H1 (cell line): ENCODE measurements at regions of chr19 and their contacts with region 1.

Region 1: GRCh38 chr19:37987356-37988332 is 80.6 kb downstream of the SIPA1L3 start:
- DNase-seq: peak in 1 of 2 experiments; percentile 86
- H3K4me3 ChIP-seq: no peak overlapping the region
- H3K27ac ChIP-seq: no peak overlapping the region
- H3K4me1 ChIP-seq: peaks cover 15 to 41% (median 31%) of the 10 kb centered on the region in 4 experiments
- H3K27me3 ChIP-seq: no peaks in the 10 kb centered on the region
- CTCF ChIP-seq: peak; percentile 62 to 73 (median 72)
- EP300 ChIP-seq: no peak
- POLR2A ChIP-seq: no peak
- RAD21 ChIP-seq: peak; percentile 54 to 65

Region 2: DNA sequence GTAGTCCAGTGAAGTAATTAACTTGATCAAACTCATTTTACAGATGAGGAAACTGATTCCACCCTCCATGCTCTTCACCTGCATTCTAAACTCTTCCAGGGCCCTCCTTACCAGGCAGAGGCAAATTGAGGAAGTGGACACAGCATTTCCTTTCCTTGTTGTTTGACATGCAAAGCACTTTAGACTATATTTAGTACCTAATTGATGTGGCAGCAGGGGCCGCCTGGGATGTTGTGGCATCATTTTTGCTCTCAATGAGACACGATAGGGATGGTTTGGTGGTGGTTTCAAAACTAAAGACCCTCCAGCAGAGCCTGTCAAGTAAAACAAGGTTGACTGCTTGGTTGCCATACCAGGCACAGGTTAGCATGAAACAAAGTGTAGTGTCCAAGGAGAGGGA is 72.7 kb before region 1 on chr19:
- CTCF ChIA-PET with region 1: interaction called, 11 read pairs
- POLR2A ChIA-PET with region 1: interaction called, 4 read pairs
- DNase-seq: no peak
- H3K4me3 ChIP-seq: no peak overlapping the region
- H3K27ac ChIP-seq: no peak overlapping the region
- H3K4me1 ChIP-seq: peaks cover 0 to 15% (median 2%) of the 10 kb centered on the region in 4 experiments; a peak in 2 of 7 replicates
- H3K27me3 ChIP-seq: no peaks in the 10 kb centered on the region
- CTCF ChIP-seq: no peak
- EP300 ChIP-seq: no peak
- POLR2A ChIP-seq: no peak
- RAD21 ChIP-seq: no peak

Region 3: DNA sequence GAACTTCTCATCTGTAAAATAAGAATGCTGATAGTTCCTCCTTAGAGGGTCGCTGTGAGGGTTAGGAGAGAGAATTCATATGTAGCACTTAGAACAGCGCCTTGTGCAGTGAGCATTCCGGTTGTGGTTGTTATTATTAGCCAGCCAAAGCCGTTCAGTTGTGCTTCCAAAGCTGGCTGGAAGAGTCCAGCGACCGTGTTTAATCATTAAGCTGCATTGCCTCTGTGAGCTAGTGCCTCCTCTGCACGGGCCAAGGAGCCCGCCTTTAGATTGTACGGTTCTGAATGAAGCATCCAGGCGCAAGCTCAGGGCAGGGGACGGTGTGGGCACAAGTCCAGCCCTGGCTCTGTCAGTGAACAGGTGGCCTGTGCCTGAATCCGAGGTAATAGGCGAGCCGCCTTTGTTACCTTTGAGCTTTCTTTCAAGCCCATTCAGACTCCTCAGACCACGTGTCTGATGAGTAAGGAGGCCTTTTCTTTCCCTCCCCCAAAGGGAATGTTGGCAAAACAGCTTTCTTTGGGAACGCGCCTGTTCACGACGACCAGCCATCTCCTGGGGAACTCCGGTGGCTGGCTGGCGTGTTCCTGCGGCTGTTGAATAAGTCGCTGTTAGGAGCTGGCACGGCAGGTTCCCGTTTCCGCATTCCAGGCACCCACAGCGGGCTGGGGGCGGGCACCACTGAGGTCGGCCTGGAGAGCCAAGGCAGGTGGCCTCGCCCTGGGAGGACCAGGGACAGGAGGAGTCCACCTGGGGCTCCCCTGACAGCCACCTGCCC is 55.6 kb before region 1 on chr19:
- CTCF ChIA-PET with region 1: interaction called, 24 read pairs
- POLR2A ChIA-PET with region 1: interaction called, 37 read pairs
- DNase-seq: peak; percentile 70 to 78
- H3K4me3 ChIP-seq: peak overlapping the region; percentile 21 to 52 (median 28); a peak in 7 of 8 replicates
- H3K27ac ChIP-seq: peak overlapping the region; percentile 91
- H3K4me1 ChIP-seq: peaks cover 25 to 39% (median 33%) of the 10 kb centered on the region in 4 experiments
- H3K27me3 ChIP-seq: no peaks in the 10 kb centered on the region
- CTCF ChIP-seq: no peak
- EP300 ChIP-seq: peak in 1 of 2 experiments; percentile 32; a peak in 1 of 3 replicates
- POLR2A ChIP-seq: 0 out of 3 replicates have a peak, but pooled peaks of 1 of the 2 experiments have one; percentile 51
- RAD21 ChIP-seq: peak in 1 of 2 experiments; percentile 16; a peak in 1 of 4 replicates

Region 4: GRCh38 chr19:37997911-37998344 is 10.3 kb after region 1 on chr19:
- CTCF ChIA-PET with region 1: interaction called, 15 read pairs
- POLR2A ChIA-PET with region 1: interaction called, 66 read pairs
- DNase-seq: no peak
- H3K4me3 ChIP-seq: no peak overlapping the region
- H3K27ac ChIP-seq: no peak overlapping the region
- H3K4me1 ChIP-seq: peaks cover 0 to 2% (median under 1%) of the 10 kb centered on the region in 4 experiments; a peak in 3 of 7 replicates
- H3K27me3 ChIP-seq: no peaks in the 10 kb centered on the region
- CTCF ChIP-seq: no peak
- EP300 ChIP-seq: no peak
- POLR2A ChIP-seq: no peak
- RAD21 ChIP-seq: no peak

Region 5: DNA sequence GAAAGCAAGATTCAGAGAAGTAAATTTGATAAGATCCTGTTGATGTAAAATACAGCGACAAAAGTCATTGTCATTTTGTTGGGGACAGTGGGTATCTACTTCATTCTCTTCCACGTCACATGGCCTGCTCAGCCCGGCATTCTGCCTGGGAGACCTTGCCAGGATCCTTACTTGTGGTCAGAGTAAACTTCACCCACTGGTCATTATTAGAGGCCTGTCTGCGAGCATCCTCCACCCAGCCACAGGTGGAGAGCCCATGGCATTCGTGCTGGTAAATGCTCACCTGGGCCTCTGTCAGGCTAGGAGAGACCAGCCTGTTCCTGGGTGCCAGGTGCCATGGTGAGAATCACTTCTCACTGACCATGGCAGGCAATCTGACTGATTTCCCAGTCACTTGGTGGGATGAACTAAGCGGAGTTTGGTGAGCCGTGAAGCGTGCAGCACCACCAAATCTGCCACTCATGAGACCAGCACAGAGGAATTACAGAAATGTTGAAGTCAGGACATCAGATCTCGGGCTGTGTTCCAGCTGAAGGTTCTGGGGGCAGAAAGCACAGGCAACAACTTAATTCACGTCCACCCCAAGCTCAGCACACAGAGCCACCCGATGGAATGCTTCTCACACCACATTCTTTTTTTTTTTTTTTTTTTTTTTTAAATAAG is 26.4 kb after region 1 on chr19:
- CTCF ChIA-PET with region 1: interaction called, 10 read pairs
- POLR2A ChIA-PET with region 1: interaction called, 5 read pairs
- DNase-seq: no peak
- H3K4me3 ChIP-seq: no peak overlapping the region
- H3K27ac ChIP-seq: no peak overlapping the region
- H3K4me1 ChIP-seq: peaks cover 0 to 14% (median 8%) of the 10 kb centered on the region in 4 experiments; a peak in 6 of 7 replicates
- H3K27me3 ChIP-seq: no peaks in the 10 kb centered on the region
- CTCF ChIP-seq: no peak
- EP300 ChIP-seq: no peak
- POLR2A ChIP-seq: no peak
- RAD21 ChIP-seq: no peak

Region 6: GRCh38 chr19:38073841-38074685 is 86.4 kb after region 1 on chr19:
- CTCF ChIA-PET with region 1: interaction called, 11 read pairs
- POLR2A ChIA-PET with region 1: no interaction called
- DNase-seq: peak; percentile 36 to 65
- H3K4me3 ChIP-seq: no peak overlapping the region
- H3K27ac ChIP-seq: no peak overlapping the region
- H3K4me1 ChIP-seq: no peaks in the 10 kb centered on the region; a peak in 1 of 7 replicates
- H3K27me3 ChIP-seq: no peaks in the 10 kb centered on the region
- CTCF ChIP-seq: peak; percentile 81 to 87 (median 86)
- EP300 ChIP-seq: no peak
- POLR2A ChIP-seq: no peak
- RAD21 ChIP-seq: peak; percentile 88 to 91